Naive thymus-derived CD4-positive, alpha-beta T cell (primary cell): ENCODE measurements at regions of chr12 and their contacts with region 1.

Region 1: DNA sequence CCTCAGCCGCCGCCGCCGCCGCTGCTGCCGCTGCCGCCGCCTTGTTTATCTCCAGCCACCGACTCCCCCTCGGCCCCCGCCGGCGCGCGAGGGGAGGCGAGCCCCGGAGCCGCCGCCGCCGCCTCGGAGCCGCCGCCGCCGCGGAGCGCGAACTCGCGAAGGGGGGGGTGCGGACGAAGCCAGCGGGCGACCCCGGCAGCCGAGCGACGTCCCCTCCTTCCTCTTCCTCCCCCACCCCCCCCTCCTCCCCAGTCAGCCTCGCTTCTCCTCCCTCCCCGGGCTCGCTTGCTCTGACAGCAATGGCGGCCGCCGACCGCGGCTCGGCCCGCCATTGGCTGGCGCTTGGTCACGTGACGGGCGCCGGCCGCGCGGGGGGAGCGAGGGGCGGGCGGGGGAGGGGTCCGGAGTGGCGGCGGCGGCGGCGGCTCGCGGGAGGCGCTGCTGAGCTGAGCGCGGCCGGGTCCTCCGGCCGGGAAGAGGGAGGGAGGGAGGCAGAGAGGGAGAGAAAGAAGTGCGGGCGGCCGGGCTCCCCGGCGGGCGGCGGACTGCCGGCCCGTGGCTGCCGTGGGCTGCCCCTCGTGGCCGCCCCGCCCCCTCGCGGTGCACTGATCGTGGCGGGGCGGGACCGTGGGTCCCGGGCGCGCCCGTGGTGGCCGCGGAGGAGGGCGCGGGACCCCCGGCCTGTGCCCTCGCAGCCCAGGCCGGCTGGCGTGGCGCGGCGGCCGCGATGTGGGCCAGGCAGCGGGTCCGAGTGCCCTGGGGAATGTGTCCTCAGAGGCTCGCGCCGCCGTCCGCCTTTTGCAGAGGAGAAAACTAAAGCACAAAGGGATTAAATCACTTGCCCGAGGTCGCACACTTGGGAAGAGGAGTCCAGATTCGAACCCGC is at the start of gene MED13L:
- DNase-seq: peak; percentile 85 to 96 (median 92)
- ATAC-seq: peak; percentile 91
- H3K4me3 ChIP-seq: peak within 1 kb of the TSS; percentile 82
- H3K4me3 Mint-ChIP-seq: peak within 1 kb of the TSS; percentile 92 to 99 (median 98)
- H3K27ac ChIP-seq: peak within 1 kb of the TSS; percentile 68
- H3K27ac Mint-ChIP-seq: peak within 1 kb of the TSS; percentile 92 to 97 (median 94)
- H3K4me1 ChIP-seq: peaks cover 13 to 20% of the 10 kb centered on the region in 2 donors
- H3K4me1 Mint-ChIP-seq: peaks cover 33 to 48% (median 38%) of the 10 kb centered on the region in 7 donors
- H3K27me3 ChIP-seq: no peaks in the 10 kb centered on the region
- H3K27me3 Mint-ChIP-seq: peaks cover 0 to 7% (median 0%) of the 10 kb centered on the region in 5 donors
- total RNA-seq, gene MED13L: 94.0 to 283 (median 180) TPM

Region 2: DNA sequence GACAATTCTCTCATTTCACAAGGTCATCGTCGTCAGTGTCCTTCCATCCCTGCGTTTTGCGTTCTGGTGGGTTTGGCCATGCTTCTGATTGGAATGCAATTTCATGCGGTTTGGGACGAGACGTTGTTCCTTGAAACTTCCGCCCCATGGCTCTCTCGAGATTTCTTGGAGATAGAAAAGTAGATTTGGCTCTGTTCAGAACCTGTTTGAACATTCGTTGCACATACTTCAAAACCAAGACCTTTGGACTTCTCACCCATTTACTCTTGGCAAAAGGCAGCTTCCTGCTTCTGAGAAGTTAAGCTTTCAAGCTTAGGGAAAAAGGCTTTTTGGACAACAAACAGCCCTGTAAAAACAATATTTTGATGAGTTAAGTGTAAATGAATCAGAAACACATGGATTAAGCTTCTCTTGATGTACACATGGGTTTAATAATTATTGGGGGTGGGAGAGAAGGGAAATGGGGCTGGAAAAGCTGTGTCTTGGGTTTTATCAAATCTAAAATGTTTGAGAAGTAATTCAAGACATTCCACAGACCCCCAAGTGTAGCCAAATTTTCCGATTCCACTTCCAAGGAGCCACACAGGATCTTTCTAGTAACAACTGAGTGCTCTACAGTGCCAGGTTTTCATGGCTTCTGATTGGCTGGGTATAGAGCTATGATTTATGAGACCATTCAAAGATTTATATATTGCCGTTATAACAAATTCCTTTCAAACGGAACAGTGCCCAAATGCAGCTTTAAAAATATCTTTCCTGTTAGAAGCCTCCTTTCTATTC is 467.3 kb before region 1 on chr12:
- CTCF ChIA-PET with region 1: no interaction called
- POLR2A ChIA-PET with region 1: no interaction called
- intact Hi-C with region 1: no loop called
- DNase-seq: no peak
- ATAC-seq: no peak
- H3K4me3 ChIP-seq: no peak overlapping the region
- H3K4me3 Mint-ChIP-seq: no peak overlapping the region
- H3K27ac ChIP-seq: no peak overlapping the region
- H3K27ac Mint-ChIP-seq: no peak overlapping the region
- H3K4me1 ChIP-seq: no peaks in the 10 kb centered on the region
- H3K4me1 Mint-ChIP-seq: no peaks in the 10 kb centered on the region
- H3K27me3 ChIP-seq: no peaks in the 10 kb centered on the region
- H3K27me3 Mint-ChIP-seq: peaks cover 0 to 27% (median 17%) of the 10 kb centered on the region in 5 donors

Region 3: GRCh38 chr12:115998119-115998633 is 279.5 kb before region 1 on chr12:
- CTCF ChIA-PET with region 1: interaction called, 4 read pairs
- POLR2A ChIA-PET with region 1: no interaction called
- intact Hi-C with region 1: loop called (anchors 1 to 5 kb)
- DNase-seq: peak in 7 of 9 donors; percentile 13 to 49 (median 31)
- ATAC-seq: peak; percentile 72
- H3K4me3 ChIP-seq: no peak overlapping the region
- H3K4me3 Mint-ChIP-seq: no peak overlapping the region
- H3K27ac ChIP-seq: no peak overlapping the region
- H3K27ac Mint-ChIP-seq: peak overlapping the region in 5 of 9 donors; percentile 31 to 69 (median 46)
- H3K4me1 ChIP-seq: no peaks in the 10 kb centered on the region
- H3K4me1 Mint-ChIP-seq: peaks cover 0 to 26% (median 10%) of the 10 kb centered on the region in 7 donors
- H3K27me3 ChIP-seq: no peaks in the 10 kb centered on the region
- H3K27me3 Mint-ChIP-seq: no peaks in the 10 kb centered on the region

Region 4: DNA sequence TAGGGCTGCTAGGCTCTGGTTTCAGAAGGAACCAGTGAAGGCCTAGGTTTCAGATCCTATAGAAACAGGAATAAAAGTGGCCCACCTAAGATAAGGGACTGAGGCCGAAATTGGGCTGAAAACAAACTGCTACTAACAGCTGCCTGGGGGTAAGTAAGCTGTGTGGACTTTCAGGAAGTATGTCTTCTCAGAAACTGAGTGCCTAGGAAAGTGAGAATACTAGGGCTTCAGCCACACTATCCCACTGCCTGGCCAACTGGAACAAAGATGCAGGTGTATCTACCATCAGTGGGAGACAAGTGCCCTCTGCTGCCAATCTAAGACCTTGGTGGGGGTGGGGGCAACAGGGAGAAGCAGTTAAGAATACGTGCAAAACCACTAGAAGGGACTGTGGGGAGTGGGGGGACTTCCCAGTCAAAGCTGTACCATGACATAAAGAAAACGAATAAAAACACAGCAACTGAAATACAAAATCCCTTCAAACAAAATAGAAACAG is 82.7 kb before region 1 on chr12:
- CTCF ChIA-PET with region 1: no interaction called
- POLR2A ChIA-PET with region 1: no interaction called
- intact Hi-C with region 1: loop called in 1 of 2 experiments (anchors 5 kb)
- DNase-seq: peak; percentile 18 to 86 (median 57)
- ATAC-seq: peak; percentile 95
- H3K4me3 ChIP-seq: no peak overlapping the region
- H3K4me3 Mint-ChIP-seq: peak overlapping the region in 9 of 10 donors; percentile 18 to 62 (median 49)
- H3K27ac ChIP-seq: no peak overlapping the region
- H3K27ac Mint-ChIP-seq: peak overlapping the region; percentile 42 to 78 (median 66)
- H3K4me1 ChIP-seq: peaks cover 7 to 25% of the 10 kb centered on the region in 2 donors
- H3K4me1 Mint-ChIP-seq: peaks cover 34 to 89% (median 73%) of the 10 kb centered on the region in 7 donors
- H3K27me3 ChIP-seq: no peaks in the 10 kb centered on the region
- H3K27me3 Mint-ChIP-seq: no peaks in the 10 kb centered on the region

Region 5: DNA sequence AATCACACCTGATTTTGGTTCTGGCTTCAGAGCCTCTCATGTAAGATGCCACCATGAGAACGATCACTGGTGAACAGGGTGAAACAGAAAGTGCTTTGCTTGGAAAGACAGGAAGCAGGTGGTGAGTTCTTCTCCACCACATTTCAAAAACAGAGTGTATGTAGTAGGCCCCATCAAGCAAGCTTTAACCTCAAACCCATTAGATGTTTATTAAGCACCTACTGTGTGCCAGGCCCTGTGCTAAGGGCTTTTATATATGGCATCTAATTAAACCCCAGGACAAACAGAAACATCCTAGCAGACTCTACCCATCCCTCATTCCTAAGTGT is 47.7 kb after region 1 on chr12:
- CTCF ChIA-PET with region 1: no interaction called
- POLR2A ChIA-PET with region 1: interaction called, 6 read pairs
- intact Hi-C with region 1: loop called (anchors 1 to 2 kb)
- DNase-seq: peak in 7 of 9 donors; percentile 22 to 57 (median 41)
- ATAC-seq: peak; percentile 81
- H3K4me3 ChIP-seq: no peak overlapping the region
- H3K4me3 Mint-ChIP-seq: peak overlapping the region; percentile 19 to 69 (median 61)
- H3K27ac ChIP-seq: peak overlapping the region; percentile 0
- H3K27ac Mint-ChIP-seq: peak overlapping the region; percentile 80 to 93 (median 87)
- H3K4me1 ChIP-seq: peaks cover 0 to 22% of the 10 kb centered on the region in 2 donors
- H3K4me1 Mint-ChIP-seq: peaks cover 12 to 39% (median 31%) of the 10 kb centered on the region in 7 donors
- H3K27me3 ChIP-seq: no peaks in the 10 kb centered on the region
- H3K27me3 Mint-ChIP-seq: no peaks in the 10 kb centered on the region

Region 6: GRCh38 chr12:116559162-116559935 is 281.7 kb after region 1 on chr12 and contains the start of gene MAP1LC3B2:
- CTCF ChIA-PET with region 1: interaction called, 3 read pairs
- POLR2A ChIA-PET with region 1: interaction called, 4 read pairs
- intact Hi-C with region 1: loop called (anchors 1 kb)
- DNase-seq: peak; percentile 53 to 85 (median 77)
- ATAC-seq: peak; percentile 92
- H3K4me3 ChIP-seq: peak within 1 kb of the TSS; percentile 54
- H3K4me3 Mint-ChIP-seq: peak within 1 kb of the TSS; percentile 70 to 90 (median 86)
- H3K27ac ChIP-seq: peak within 1 kb of the TSS; percentile 49
- H3K27ac Mint-ChIP-seq: peak within 1 kb of the TSS; percentile 88 to 99 (median 96)
- H3K4me1 ChIP-seq: peaks cover 29% of the 10 kb centered on the region in 2 donors
- H3K4me1 Mint-ChIP-seq: peaks cover 24 to 54% (median 48%) of the 10 kb centered on the region in 7 donors
- H3K27me3 ChIP-seq: no peaks in the 10 kb centered on the region
- H3K27me3 Mint-ChIP-seq: peaks cover 0 to 6% (median 0%) of the 10 kb centered on the region in 5 donors
- total RNA-seq, gene MAP1LC3B2: 0.48 to 6.6 (median 1.5) TPM

Region 7: DNA sequence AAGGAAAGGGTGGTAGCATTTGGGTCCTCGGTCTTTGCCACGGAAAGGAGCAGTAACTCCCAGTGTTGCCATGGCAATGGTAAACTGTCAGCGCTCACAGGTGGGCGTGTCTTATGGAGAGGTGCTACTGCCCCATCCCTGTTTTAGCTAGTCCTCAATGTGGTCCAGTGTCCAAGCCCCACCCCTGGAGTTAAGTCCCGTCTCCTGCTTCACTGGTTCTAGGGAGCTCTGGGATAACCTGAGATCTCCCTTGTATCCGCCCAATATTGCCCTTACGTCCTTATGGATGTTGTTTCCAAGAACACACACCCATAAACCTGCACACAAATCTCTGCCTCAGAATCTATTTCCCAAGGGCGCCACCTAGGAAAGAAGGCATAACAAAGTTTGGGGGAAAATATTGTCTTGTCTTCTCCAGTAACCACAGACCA is 396.1 kb after region 1 on chr12:
- CTCF ChIA-PET with region 1: no interaction called
- POLR2A ChIA-PET with region 1: no interaction called
- intact Hi-C with region 1: loop called in 1 of 2 experiments (anchors 2 kb)
- DNase-seq: peak in 1 of 9 donors; percentile 10
- ATAC-seq: no peak
- H3K4me3 ChIP-seq: no peak overlapping the region
- H3K4me3 Mint-ChIP-seq: peak overlapping the region; percentile 16 to 93 (median 75)
- H3K27ac ChIP-seq: no peak overlapping the region
- H3K27ac Mint-ChIP-seq: peak overlapping the region in 7 of 9 donors; percentile 83 to 97 (median 95)
- H3K4me1 ChIP-seq: peaks cover 12 to 21% of the 10 kb centered on the region in 2 donors
- H3K4me1 Mint-ChIP-seq: peaks cover 28 to 56% (median 43%) of the 10 kb centered on the region in 7 donors
- H3K27me3 ChIP-seq: no peaks in the 10 kb centered on the region
- H3K27me3 Mint-ChIP-seq: peaks cover 0 to 2% (median 0%) of the 10 kb centered on the region in 5 donors

Region 8: DNA sequence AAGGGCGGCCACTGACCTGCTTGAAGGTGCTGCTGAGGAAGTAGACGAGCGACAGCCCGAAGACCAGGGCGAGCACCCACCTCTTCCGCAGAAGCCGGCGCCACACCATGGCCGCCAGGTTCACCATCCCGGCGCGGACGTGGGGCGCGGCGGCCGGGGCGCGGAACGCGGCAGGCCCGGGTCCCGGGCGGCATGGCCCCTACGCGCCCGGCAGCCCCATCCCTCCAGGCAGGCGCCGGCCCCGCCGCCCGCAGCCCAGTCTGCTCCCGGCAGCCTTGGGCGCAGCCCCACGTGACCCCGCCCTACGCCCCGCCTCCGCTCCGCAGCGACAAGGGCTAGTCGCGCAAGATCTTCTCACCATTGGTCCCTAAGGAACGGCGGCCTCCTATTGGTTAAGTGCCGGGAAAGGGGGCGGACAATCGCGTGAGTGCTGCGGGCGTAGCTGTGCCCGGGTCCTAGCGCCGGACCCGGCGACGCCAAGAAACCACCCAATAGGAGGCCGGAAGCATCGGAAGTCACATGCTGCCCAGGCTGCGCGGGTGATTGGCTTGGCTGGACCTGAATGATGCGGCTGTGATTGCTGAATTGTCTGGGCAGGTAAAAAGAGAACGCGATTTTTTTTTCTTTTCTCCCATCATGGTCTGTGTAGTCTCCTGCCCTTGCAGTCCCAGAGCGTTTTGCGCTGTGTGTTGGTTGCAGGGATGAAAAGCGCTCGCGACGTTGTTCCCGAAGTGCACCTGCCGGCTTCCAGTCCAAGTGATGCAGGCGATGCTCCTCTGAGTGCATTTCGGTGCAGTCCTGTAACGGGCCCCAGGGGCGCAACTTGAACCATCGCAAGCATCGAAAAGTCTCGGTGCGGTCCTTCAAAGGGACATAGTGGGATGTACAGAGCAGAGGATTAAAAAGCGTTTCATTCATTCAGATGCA is 460.4 kb after region 1 on chr12 and contains the starts of genes RNFT2 and SPRING1:
- CTCF ChIA-PET with region 1: no interaction called
- POLR2A ChIA-PET with region 1: no interaction called
- intact Hi-C with region 1: loop called (anchors 1 kb)
- DNase-seq: peak; percentile 94 to 99 (median 99)
- ATAC-seq: peak; percentile 99
- H3K4me3 ChIP-seq: peak within 1 kb of the TSS; percentile 82
- H3K4me3 Mint-ChIP-seq: peak within 1 kb of the TSS; percentile 94 to 100 (median 96)
- H3K27ac ChIP-seq: peak within 1 kb of the TSS; percentile 75
- H3K27ac Mint-ChIP-seq: peak within 1 kb of the TSS; percentile 75 to 92 (median 88)
- H3K4me1 ChIP-seq: peaks cover 4 to 12% of the 10 kb centered on the region in 2 donors
- H3K4me1 Mint-ChIP-seq: peaks cover 18 to 43% (median 36%) of the 10 kb centered on the region in 7 donors
- H3K27me3 ChIP-seq: no peaks in the 10 kb centered on the region
- H3K27me3 Mint-ChIP-seq: no peaks in the 10 kb centered on the region
- total RNA-seq, gene RNFT2: 5.4 to 8.3 (median 7.4) TPM
- total RNA-seq, gene SPRING1: 12.1 to 29.5 (median 25.4) TPM